ENCODE measurements at regions of chr7 and their contacts with region 1.

Region 1: DNA sequence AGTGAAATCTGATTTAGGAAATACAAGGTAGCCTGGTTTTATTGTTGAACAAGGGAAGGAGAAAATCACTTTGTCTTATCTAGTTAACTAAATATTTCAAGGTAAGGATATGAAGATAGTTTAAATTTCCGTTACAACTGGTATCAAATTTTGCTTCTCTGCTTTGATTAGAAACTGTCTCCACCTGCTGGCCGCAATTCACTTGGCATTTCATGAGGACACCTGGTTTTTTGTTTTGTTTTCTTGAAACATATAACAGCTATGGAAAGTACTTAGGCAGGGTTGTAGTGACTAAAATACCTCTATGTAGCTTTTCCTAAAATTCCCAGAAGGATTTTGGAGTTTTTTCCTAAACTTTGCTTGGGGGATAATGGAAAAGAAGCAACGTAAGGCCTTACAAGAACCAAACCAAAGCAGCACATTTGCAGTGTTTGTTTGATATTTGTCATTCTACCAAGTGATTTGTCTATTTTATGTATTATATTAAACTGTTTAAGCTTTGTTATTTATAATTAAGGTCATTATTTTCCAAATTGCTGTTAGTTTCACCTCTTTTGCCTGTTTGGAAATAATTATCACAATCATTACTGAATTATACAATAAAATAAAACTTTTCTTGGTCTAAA is 73.6 kb downstream of the AHCYL2 start:
- DNase-seq: no peak
- H3K4me3 ChIP-seq: no peak overlapping the region
- H3K27ac ChIP-seq: no peak overlapping the region
- H3K4me1 ChIP-seq: no peaks in the 10 kb centered on the region
- H3K27me3 ChIP-seq: no peaks in the 10 kb centered on the region
- CTCF ChIP-seq: peak in 2 of 3 experiments; percentile 68 to 73; a peak in 3 of 4 replicates
- EP300 ChIP-seq: no peak
- POLR2A ChIP-seq: no peak
- RAD21 ChIP-seq: peak; percentile 71 to 74

Region 2: GRCh38 chr7:129009437-129009836 is 288.9 kb before region 1 on chr7:
- CTCF ChIA-PET with region 1: no interaction called
- POLR2A ChIA-PET with region 1: no interaction called
- DNase-seq: no peak
- H3K4me3 ChIP-seq: no peak overlapping the region
- H3K27ac ChIP-seq: no peak overlapping the region
- H3K4me1 ChIP-seq: no peaks in the 10 kb centered on the region
- H3K27me3 ChIP-seq: no peaks in the 10 kb centered on the region
- CTCF ChIP-seq: no peak
- EP300 ChIP-seq: no peak
- POLR2A ChIP-seq: no peak
- RAD21 ChIP-seq: no peak

Region 3: GRCh38 chr7:129224251-129225205 is 73.9 kb before region 1 on chr7 and contains the start of gene AHCYL2:
- CTCF ChIA-PET with region 1: interaction called, 78 read pairs
- POLR2A ChIA-PET with region 1: no interaction called
- DNase-seq: peak; percentile 88 to 94
- H3K4me3 ChIP-seq: peak within 1 kb of the TSS; percentile 79 to 95 (median 88)
- H3K27ac ChIP-seq: peak within 1 kb of the TSS; percentile 50
- H3K4me1 ChIP-seq: peaks cover 0 to 9% (median 4%) of the 10 kb centered on the region in 4 experiments; a peak in 3 of 7 replicates
- H3K27me3 ChIP-seq: no peaks in the 10 kb centered on the region
- CTCF ChIP-seq: no peak
- EP300 ChIP-seq: no peak
- POLR2A ChIP-seq: peak in 1 of 2 experiments; percentile 59; a peak in 2 of 3 replicates
- RAD21 ChIP-seq: 0 out of 4 replicates have a peak, but pooled peaks of 1 of the 2 experiments have one; percentile 2
- total RNA-seq, gene AHCYL2: 25.4 and 30.5 TPM in 2 replicates

Region 4: DNA sequence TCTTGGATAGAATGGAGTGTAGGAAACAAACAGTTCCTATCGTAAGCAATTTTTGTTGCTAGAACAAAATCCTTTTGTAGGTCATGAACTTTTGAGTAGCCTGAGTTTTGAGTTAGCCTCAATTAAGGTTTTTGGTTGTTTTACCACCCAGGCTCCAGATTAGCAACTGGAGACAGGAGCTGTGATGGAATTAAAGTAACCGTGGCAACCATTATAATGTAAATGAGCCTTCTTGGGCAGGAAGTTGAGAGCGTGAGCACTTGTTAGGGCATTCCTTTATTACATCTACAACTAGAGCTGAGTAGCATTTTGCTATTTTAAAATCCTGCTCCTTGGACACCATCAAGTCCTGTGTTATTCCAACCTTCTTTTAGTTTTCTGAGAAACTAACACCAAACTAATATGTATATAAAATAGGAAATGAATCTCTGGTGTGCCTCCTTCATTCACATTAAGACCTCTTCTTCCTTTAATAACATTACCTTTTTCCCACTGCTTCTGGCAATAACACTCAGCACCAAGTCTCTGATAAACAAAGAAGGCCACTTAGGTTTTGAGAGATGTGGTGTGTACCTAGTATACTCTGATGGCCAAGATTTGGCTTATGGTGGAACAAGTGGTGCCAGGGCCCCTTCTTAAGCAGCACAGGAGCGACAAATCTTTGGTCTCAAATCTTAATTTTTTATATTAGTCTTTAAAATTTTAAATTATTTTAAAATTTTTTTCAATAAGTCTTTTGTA is 39.6 kb before region 1 on chr7:
- CTCF ChIA-PET with region 1: interaction called, 16 read pairs
- POLR2A ChIA-PET with region 1: no interaction called
- DNase-seq: peak in 1 of 2 experiments; percentile 39
- H3K4me3 ChIP-seq: peak overlapping the region in 2 of 4 experiments; percentile 8 to 49; a peak in 3 of 8 replicates
- H3K27ac ChIP-seq: peak overlapping the region; percentile 83
- H3K4me1 ChIP-seq: peaks cover 0 to 21% (median 11%) of the 10 kb centered on the region in 4 experiments; a peak in 6 of 7 replicates
- H3K27me3 ChIP-seq: no peaks in the 10 kb centered on the region
- CTCF ChIP-seq: no peak
- EP300 ChIP-seq: peak in 1 of 2 experiments; percentile 70; a peak in 1 of 3 replicates
- POLR2A ChIP-seq: peak in 1 of 2 experiments; percentile 47; a peak in 2 of 3 replicates
- RAD21 ChIP-seq: no peak

Region 5: DNA sequence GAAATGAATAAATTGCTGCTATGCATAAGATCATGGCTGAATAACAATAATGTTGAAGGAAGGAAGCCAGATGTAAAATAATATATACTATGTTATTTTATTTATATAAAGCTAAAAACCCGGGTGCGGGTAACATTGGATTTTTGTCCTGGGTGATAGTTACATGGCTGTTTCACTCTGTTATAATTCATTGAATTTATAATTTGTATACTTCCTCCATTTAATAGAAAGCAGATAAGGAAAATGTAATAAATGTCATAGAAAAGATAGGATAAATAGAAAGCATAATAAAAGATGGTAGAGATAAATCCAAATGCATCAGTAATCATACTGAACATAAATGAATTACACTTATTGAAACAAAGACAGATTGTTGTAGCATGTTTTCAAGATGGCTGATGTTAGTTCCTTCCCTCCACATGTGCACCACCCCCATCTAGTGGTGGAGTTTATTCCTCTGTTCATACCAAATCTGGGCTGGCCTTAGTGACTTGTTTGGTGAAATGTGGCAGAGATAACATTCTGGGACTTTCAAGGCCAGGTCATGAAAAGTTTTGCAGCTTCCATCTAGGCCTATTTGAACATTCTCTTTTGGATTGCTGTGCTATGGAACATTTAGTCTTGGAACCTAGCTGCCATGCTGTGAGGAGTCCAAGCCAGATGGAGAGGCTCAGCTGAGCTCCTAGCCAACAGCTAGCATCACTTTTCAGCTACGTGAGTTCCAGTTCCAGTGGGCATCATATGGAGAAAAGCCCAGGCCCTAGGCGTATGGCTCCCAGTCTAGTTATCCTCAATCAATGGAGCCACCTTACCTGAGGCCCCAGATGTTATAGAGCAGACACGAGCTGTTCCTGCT is 26.7 kb before region 1 on chr7:
- CTCF ChIA-PET with region 1: interaction called, 15 read pairs
- POLR2A ChIA-PET with region 1: no interaction called
- DNase-seq: peak in 1 of 2 experiments; percentile 64
- H3K4me3 ChIP-seq: no peak overlapping the region
- H3K27ac ChIP-seq: no peak overlapping the region
- H3K4me1 ChIP-seq: no peaks in the 10 kb centered on the region
- H3K27me3 ChIP-seq: no peaks in the 10 kb centered on the region
- CTCF ChIP-seq: peak in 2 of 3 experiments; percentile 76 to 81; a peak in 3 of 4 replicates
- EP300 ChIP-seq: no peak
- POLR2A ChIP-seq: no peak
- RAD21 ChIP-seq: peak; percentile 81 to 89

Region 6: GRCh38 chr7:129285111-129285510 is 13.3 kb before region 1 on chr7:
- CTCF ChIA-PET with region 1: interaction called, 57 read pairs
- POLR2A ChIA-PET with region 1: interaction called, 6 read pairs
- DNase-seq: no peak
- H3K4me3 ChIP-seq: no peak overlapping the region
- H3K27ac ChIP-seq: 0 out of 2 replicates have a peak overlapping the region, but pooled peaks have one; percentile 29
- H3K4me1 ChIP-seq: peaks cover 2 to 4% (median 3%) of the 10 kb centered on the region in 4 experiments; a peak in 5 of 7 replicates
- H3K27me3 ChIP-seq: no peaks in the 10 kb centered on the region
- CTCF ChIP-seq: no peak
- EP300 ChIP-seq: no peak
- POLR2A ChIP-seq: no peak
- RAD21 ChIP-seq: no peak

Region 7: DNA sequence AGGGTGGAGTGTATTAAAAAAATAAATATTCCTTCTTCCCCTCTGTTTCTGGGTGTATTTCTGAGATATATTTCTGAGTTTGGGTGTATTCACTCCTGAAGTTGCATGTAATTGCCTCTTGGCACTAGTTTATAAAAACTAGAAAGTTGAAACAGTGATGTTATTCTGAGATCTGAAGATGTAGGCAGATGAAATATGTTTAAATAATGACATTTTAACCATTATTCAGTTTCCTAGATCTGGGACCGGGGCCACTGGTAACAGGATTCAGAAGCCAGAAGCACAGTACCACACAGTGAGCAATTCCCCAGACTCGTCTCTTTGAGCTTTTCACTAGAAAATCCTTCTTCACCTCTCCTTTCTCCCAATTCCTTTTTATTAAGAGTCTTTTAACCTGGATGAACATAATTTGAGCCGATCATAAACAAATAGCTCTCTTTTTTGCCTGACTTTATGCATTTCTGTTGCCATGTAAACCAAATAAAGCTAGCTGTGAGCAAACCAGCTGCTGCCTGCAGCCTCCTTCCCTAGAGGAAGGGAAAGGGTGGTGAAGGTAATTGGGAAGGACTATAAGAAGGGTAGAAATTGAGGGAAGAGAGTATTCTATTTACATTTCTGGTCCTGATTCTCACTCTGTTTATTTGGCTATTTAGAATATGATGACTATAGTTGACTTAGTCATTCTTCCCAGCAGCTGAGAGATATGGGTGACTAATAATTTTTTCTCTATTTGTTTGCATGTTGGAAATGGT is 34.1 kb after region 1 on chr7:
- CTCF ChIA-PET with region 1: interaction called, 15 read pairs
- POLR2A ChIA-PET with region 1: no interaction called
- DNase-seq: no peak
- H3K4me3 ChIP-seq: no peak overlapping the region
- H3K27ac ChIP-seq: no peak overlapping the region
- H3K4me1 ChIP-seq: no peaks in the 10 kb centered on the region
- H3K27me3 ChIP-seq: no peaks in the 10 kb centered on the region
- CTCF ChIP-seq: no peak
- EP300 ChIP-seq: no peak
- POLR2A ChIP-seq: no peak
- RAD21 ChIP-seq: no peak

Region 8: DNA sequence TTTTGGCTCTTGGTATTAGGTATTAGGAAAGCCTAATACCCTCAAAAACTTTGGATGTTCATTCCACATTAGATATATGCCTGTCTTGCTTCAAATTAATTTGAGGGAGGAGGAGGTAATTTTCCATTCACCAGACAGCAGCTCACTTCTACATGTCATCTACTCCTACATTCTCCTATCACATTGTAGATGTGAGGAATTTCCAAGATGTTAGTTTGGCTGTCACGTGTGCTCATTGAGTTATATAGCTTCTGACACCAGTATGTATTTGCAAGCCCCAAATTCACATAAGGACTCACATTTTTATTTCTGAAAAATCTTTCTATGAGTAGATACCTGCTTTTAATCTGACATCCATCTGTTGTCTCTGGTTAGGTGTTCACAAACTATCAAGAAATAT is 181.4 kb after region 1 on chr7:
- CTCF ChIA-PET with region 1: no interaction called
- POLR2A ChIA-PET with region 1: no interaction called
- DNase-seq: no peak
- H3K4me3 ChIP-seq: no peak overlapping the region
- H3K27ac ChIP-seq: no peak overlapping the region
- H3K4me1 ChIP-seq: no peaks in the 10 kb centered on the region
- H3K27me3 ChIP-seq: no peaks in the 10 kb centered on the region
- CTCF ChIP-seq: no peak
- EP300 ChIP-seq: no peak
- POLR2A ChIP-seq: no peak
- RAD21 ChIP-seq: no peak